Common myeloid progenitor, CD34-positive (primary cell): ENCODE measurements at regions of chr2 and their contacts with region 1.

Region 1: GRCh38 chr2:176104325-176105077 is 2.6 kb upstream of the HOXD11 start:
- DNase-seq: no peak
- H3K4me3 ChIP-seq: no peak overlapping the region
- H3K27ac ChIP-seq: no peak overlapping the region
- H3K4me1 ChIP-seq: peaks cover 0 to 11% (median 8%) of the 10 kb centered on the region in 4 experiments
- H3K27me3 ChIP-seq: peaks cover 27 to 99% (median 62%) of the 10 kb centered on the region in 5 experiments

Region 2: GRCh38 chr2:176088048-176088936 is 16.2 kb before region 1 on chr2:
- CTCF ChIA-PET with region 1: interaction called, 13 read pairs
- POLR2A ChIA-PET with region 1: no interaction called
- DNase-seq: peak in 1 of 3 donors; percentile 46
- H3K4me3 ChIP-seq: peak overlapping the region in 6 of 7 experiments; percentile 21 to 61 (median 32)
- H3K27ac ChIP-seq: no peak overlapping the region
- H3K4me1 ChIP-seq: peaks cover 0 to 18% (median 9%) of the 10 kb centered on the region in 4 experiments
- H3K27me3 ChIP-seq: peaks cover 24 to 99% (median 74%) of the 10 kb centered on the region in 5 experiments

Region 3: DNA sequence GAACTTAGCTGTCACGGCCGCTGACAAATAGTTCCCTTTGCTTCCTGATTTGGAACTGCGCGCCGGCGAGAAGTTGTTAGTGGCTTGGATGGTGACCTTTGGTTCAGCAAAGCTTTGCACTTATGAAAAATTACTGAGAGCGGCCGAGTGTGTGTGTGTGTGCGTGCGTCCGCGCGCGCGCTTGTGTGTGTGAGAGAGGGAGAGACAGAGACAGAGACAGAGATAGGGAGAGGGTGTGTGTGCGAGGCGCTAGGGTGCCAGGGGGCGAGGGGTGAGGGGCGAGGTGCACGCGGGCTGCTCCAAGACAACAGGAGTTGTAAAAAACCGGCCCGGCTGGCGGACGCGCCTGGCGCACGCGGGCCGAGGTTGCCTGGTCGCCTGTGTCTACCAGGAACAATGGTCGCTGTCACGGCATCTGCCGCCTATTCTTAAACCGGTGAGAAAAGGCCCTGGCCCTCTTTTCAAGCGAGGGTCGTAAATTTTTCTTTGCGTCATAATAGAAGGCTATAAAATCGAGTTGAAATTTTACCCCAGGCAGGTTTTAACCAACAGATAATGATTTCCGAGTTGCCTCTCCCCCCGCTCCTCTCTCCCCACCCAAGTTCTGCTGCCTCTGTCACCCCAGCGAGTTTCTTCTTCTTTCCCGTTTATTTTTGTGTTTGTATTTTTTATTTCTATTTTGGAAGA is 53.1 kb after region 1 on chr2:
- CTCF ChIA-PET with region 1: no interaction called
- POLR2A ChIA-PET with region 1: no interaction called
- DNase-seq: peak in 1 of 3 donors; percentile 41
- H3K4me3 ChIP-seq: no peak overlapping the region
- H3K27ac ChIP-seq: no peak overlapping the region
- H3K4me1 ChIP-seq: peaks cover 0 to 7% (median 3%) of the 10 kb centered on the region in 4 experiments
- H3K27me3 ChIP-seq: peaks cover 14 to 100% (median 67%) of the 10 kb centered on the region in 5 experiments